ENCODE measurements at regions of chr2 and their contacts with region 1.

Region 1: DNA sequence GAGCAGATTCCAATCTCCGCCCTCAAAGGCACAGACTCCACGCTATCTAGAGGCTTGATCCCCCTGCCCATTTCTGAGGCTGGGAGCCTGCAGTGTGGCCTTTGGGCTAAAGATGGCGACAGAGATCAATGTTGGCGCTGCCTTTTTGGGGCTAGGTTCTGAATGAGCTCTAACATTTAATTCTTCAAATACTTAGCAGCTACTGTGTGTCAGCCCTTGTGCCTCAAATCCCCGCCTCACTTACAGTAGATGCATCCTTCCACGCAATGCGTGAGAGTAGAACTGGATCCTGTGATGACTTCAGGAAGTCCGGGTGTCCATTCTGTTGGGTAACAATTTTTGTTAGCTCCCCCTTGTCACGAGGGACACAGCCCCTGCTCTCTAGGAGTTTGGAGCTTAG is 12.4 kb downstream of the IL1F10 start:
- DNase-seq: peak in 1 of 2 experiments; percentile 63
- H3K4me3 ChIP-seq: peak overlapping the region; percentile 48; the same call in 1 of the 2 replicates
- H3K27ac ChIP-seq: peak overlapping the region; percentile 100
- H3K4me1 ChIP-seq: peaks cover 57% of the 10 kb centered on the region
- H3K27me3 ChIP-seq: no peaks in the 10 kb centered on the region
- CTCF ChIP-seq: peak; percentile 80

Region 2: DNA sequence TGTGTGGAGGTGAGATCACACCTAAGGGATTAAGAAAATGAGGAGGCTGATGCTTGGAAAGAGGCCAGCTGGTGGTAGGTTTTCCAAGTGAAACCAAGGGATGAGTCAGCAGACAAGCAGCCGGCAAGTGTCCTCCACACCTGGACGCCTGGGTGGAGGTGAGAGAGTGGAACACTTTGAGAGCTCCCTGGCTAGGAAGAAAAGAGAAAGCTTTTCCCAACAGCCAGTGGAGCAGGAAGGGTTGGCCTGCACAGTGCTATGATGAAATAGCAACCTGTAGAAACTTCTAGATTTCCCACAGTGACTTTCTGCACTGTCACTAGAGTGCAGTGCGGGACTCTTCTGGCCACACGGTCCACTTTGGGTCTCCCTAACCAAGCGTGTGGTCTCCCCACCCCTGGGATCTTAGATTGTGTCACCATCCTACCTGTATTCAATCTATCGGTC is 188.7 kb before region 1 on chr2:
- CTCF ChIA-PET with region 1: no interaction called
- POLR2A ChIA-PET with region 1: no interaction called
- intact Hi-C with region 1: loop called (anchors 2 kb)
- DNase-seq: peak; percentile 88 to 95
- H3K4me3 ChIP-seq: no peak overlapping the region
- H3K27ac ChIP-seq: peak overlapping the region; percentile 95
- H3K4me1 ChIP-seq: peaks cover 17% of the 10 kb centered on the region
- H3K27me3 ChIP-seq: no peaks in the 10 kb centered on the region
- CTCF ChIP-seq: 0 out of 2 replicates have a peak, but pooled peaks have one; percentile 11

Region 3: GRCh38 chr2:112924821-112925220 is 155.3 kb before region 1 on chr2:
- CTCF ChIA-PET with region 1: no interaction called
- POLR2A ChIA-PET with region 1: no interaction called
- intact Hi-C with region 1: no loop called
- DNase-seq: no peak
- H3K4me3 ChIP-seq: no peak overlapping the region
- H3K27ac ChIP-seq: no peak overlapping the region
- H3K4me1 ChIP-seq: peaks cover 17% of the 10 kb centered on the region
- H3K27me3 ChIP-seq: no peaks in the 10 kb centered on the region
- CTCF ChIP-seq: no peak

Region 4: DNA sequence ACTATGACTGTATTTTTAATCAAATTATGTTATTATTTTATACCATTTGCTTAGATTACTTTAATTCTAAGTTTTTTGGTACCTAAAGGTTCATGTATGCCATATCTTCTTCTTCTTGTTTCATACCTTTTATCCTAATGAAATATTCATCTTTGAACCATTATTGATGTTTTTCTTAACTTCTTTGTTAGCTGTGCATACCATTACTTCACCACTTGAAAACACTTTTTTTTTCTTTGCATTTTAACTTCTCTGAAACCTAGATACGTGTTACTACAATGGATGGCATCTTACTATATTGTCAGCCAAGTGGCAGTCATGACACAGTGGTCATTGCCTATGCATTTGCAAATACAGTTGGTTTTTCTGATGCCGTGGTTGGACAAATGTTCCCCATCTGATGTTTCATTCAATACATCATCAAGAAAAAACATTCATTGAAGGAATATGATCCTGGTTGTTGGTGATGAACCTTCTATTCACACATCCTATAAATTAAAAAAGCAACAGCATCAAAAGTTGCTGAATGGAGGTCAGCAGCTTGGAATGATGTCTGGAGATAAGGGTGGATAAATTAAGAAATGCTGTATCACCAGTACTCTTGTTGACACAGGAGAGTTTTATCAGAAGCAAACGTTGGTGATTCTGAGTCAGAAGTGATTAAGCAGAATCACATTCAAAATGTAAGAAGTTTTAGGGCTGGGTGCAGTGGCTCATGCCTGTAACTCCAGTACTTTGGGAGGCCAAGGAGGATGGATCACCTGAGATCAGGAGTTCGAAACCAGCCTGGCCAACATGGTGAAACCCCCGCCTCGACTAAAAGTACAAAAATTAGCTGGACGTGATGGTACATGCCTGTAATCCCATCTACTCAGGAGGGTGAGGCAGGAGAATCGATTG is 67.4 kb before region 1 on chr2:
- CTCF ChIA-PET with region 1: no interaction called
- POLR2A ChIA-PET with region 1: no interaction called
- intact Hi-C with region 1: loop called (anchors 5 kb)
- DNase-seq: peak; percentile 27 to 84
- H3K4me3 ChIP-seq: no peak overlapping the region
- H3K27ac ChIP-seq: peak overlapping the region; percentile 74
- H3K4me1 ChIP-seq: peaks cover 19% of the 10 kb centered on the region
- H3K27me3 ChIP-seq: no peaks in the 10 kb centered on the region
- CTCF ChIP-seq: no peak

Region 5: GRCh38 chr2:113138428-113139322 is 58.5 kb after region 1 on chr2:
- CTCF ChIA-PET with region 1: interaction called, 10 read pairs
- POLR2A ChIA-PET with region 1: interaction called, 4 read pairs
- intact Hi-C with region 1: loop called (anchors 1 kb)
- DNase-seq: peak; percentile 53 to 66
- H3K4me3 ChIP-seq: peak overlapping the region; percentile 24; the same call in 1 of the 2 replicates
- H3K27ac ChIP-seq: no peak overlapping the region
- H3K4me1 ChIP-seq: peaks cover 10% of the 10 kb centered on the region
- H3K27me3 ChIP-seq: no peaks in the 10 kb centered on the region
- CTCF ChIP-seq: peak; percentile 88

Region 6: GRCh38 chr2:113248997-113249770 is 169.1 kb after region 1 on chr2:
- CTCF ChIA-PET with region 1: no interaction called
- POLR2A ChIA-PET with region 1: no interaction called
- intact Hi-C with region 1: loop called (anchors 2 kb)
- DNase-seq: peak in 1 of 2 experiments; percentile 73
- H3K4me3 ChIP-seq: no peak overlapping the region
- H3K27ac ChIP-seq: no peak overlapping the region
- H3K4me1 ChIP-seq: 0 out of 2 replicates have a peak, but pooled peaks cover 4% of the 10 kb centered on the region
- H3K27me3 ChIP-seq: no peaks in the 10 kb centered on the region
- CTCF ChIP-seq: peak; percentile 97

Region 7: DNA sequence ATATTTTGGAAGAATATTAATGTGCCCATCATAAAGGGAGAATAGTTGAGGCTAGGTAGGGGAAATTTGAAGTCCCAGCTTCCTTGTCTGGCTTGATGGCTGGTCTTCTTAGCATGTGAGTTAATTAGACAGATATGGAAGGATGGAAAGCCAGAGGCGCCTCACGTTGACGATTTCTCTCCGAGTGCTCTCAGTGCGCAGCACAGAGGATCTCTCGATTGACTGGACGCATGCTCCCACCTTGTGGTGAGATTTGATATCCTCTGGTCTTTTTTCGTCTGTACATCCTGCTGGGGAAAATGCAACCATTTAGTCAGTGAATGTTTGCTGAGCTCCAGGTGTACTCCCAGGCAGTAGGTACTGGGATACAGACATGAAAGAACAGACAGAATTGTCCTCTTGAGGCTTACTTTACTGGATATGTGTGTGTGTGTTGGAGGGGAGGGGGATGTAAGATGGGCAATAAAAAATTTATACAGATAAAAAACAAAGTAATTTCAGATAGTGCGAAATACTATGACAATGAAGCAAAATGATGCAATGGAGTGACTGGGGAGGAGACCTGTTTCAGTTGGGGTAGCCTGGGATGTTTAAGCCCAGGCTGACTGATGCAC is 290.5 kb after region 1 on chr2:
- CTCF ChIA-PET with region 1: interaction called, 4 read pairs
- POLR2A ChIA-PET with region 1: no interaction called
- intact Hi-C with region 1: loop called (anchors 2 kb)
- DNase-seq: peak; percentile 69 to 73
- H3K4me3 ChIP-seq: no peak overlapping the region
- H3K27ac ChIP-seq: no peak overlapping the region
- H3K4me1 ChIP-seq: peaks cover 12% of the 10 kb centered on the region
- H3K27me3 ChIP-seq: no peaks in the 10 kb centered on the region
- CTCF ChIP-seq: peak; percentile 75

Measured in PC-9 (cell line).